ENCODE measurements at regions of chr2 and their contacts with region 1.

Region 1: DNA sequence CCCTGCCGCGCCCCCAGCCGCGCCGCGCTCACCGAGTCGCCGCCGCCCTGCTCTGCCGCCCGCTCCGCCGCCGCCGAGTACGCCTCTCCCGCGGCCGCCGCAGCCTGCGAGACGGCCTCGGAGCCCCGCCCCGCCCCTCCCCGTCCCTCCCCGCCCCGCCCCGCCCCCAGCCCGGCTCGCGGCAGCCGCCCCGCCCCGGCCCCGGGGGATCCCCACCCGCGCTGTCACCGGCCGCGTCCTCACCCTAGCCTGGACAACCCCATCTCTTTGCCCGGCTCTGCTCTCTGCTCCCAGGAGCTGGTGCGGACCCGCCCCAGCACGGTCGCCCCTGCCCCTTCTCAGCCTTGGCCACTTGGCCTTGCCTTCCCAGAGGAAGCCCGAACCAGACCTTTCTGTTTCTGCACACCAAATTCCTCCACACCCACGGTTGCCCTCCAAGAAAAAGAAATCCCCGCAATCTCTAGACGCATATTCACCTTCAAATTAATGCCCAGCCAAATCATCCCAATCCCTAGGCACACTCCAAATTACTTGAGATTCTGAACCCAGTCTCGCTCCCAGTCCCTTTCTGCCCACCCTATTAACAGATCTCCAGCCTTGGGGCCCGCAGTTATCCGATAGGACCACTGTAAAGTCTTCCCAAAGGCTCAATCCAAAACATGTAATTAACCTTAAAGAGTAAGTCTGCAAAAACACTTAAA is at the start of gene CYRIA:
- DNase-seq: peak; percentile 46
- H3K4me3 Mint-ChIP-seq: peak within 1 kb of the TSS; percentile 87
- H3K27ac Mint-ChIP-seq: peak within 1 kb of the TSS; percentile 86
- H3K4me1 Mint-ChIP-seq: peaks cover 24% of the 10 kb centered on the region
- H3K27me3 Mint-ChIP-seq: peaks cover 43% of the 10 kb centered on the region
- total RNA-seq, gene CYRIA: 1.8 TPM in 2 replicates

Region 2: GRCh38 chr2:16321872-16322271 is 344.0 kb before region 1 on chr2:
- intact Hi-C with region 1: no loop called
- DNase-seq: no peak
- H3K4me3 Mint-ChIP-seq: no peak overlapping the region
- H3K27ac Mint-ChIP-seq: no peak overlapping the region
- H3K4me1 Mint-ChIP-seq: no peaks in the 10 kb centered on the region
- H3K27me3 Mint-ChIP-seq: no peaks in the 10 kb centered on the region

Region 3: GRCh38 chr2:16507655-16508489 is 158.0 kb before region 1 on chr2:
- intact Hi-C with region 1: no loop called
- DNase-seq: no peak
- H3K4me3 Mint-ChIP-seq: no peak overlapping the region
- H3K27ac Mint-ChIP-seq: no peak overlapping the region
- H3K4me1 Mint-ChIP-seq: no peaks in the 10 kb centered on the region
- H3K27me3 Mint-ChIP-seq: peaks cover 27% of the 10 kb centered on the region

Region 4: DNA sequence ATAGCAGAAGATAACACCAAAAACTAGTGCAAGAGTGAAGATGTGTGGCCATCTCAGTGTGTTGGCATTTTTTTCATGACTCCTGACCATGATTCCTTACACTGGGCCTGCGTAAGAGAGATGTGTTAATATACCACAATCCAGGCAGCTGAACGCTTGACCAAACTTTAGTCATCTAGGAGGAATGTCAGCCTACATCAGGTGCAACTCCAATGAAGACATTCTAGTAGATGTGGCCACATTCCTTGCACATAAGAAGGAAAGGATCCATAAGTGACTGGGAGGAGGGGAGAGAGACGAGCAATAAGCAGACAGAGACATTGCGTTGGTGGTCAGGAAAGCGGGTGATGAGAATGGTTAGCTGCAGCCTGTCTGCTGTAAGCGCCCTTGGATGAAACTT is 42.9 kb before region 1 on chr2:
- intact Hi-C with region 1: loop called (anchors 5 kb)
- DNase-seq: no peak
- H3K4me3 Mint-ChIP-seq: no peak overlapping the region
- H3K27ac Mint-ChIP-seq: no peak overlapping the region
- H3K4me1 Mint-ChIP-seq: peaks cover 41% of the 10 kb centered on the region
- H3K27me3 Mint-ChIP-seq: peaks cover 11% of the 10 kb centered on the region